ENCODE measurements at regions of chr6 and their contacts with region 1.

Region 1: GRCh38 chr6:42901536-42901957 is 14.3 kb upstream of the PTCRA start:
- DNase-seq: peak; percentile 76 to 88 (median 87)
- ATAC-seq: peak; percentile 100
- H3K4me3 ChIP-seq: peak overlapping the region in 1 of 3 donors; percentile 18
- H3K27ac ChIP-seq: peak overlapping the region in 1 of 3 donors; percentile 49
- H3K4me1 ChIP-seq: peaks cover 0 to 14% (median 3%) of the 10 kb centered on the region in 4 donors
- H3K27me3 ChIP-seq: no peaks in the 10 kb centered on the region
- CTCF ChIP-seq: peak; percentile 87 to 96 (median 93)
- POLR2A ChIP-seq: no peak

Region 2: DNA sequence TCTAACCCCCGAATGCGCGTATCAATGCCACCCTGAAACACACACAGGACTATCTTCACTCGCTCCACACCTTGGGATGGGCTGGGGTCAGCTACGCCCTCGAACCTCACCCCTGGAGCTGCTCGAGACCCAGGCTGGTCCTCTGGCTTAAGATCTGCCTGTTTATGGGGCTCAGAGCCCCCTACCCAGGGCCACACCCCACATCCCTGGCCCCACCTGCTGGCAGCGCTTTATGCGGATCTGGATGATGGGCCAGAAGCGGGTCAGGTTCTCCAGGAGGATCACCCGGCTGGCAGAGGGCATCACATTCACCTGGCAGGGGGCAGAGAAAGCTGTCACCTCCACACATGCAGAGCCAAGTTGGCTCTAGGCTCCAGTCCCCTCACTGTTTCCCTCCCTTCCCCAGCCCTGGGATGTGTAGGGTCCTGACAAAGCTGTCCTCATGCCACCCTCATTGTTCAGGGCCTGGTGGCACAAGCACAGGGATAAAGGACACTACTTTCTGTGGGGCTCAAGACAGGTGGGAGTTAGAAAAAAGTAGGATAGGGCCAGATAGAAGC is 143.9 kb after region 1 on chr6:
- intact Hi-C with region 1: loop called in 1 of 2 experiments (anchors 10 kb)
- DNase-seq: no peak
- ATAC-seq: no peak
- H3K4me3 ChIP-seq: no peak overlapping the region
- H3K27ac ChIP-seq: no peak overlapping the region
- H3K4me1 ChIP-seq: no peaks in the 10 kb centered on the region
- H3K27me3 ChIP-seq: no peaks in the 10 kb centered on the region
- CTCF ChIP-seq: no peak
- POLR2A ChIP-seq: no peak

Region 3: GRCh38 chr6:43129434-43130194 is 228.1 kb after region 1 on chr6:
- intact Hi-C with region 1: loop called in 1 of 2 experiments (anchors 10 kb)
- DNase-seq: peak in 1 of 3 donors; percentile 46
- ATAC-seq: peak; percentile 54 to 84 (median 75)
- H3K4me3 ChIP-seq: no peak overlapping the region
- H3K27ac ChIP-seq: no peak overlapping the region
- H3K4me1 ChIP-seq: no peaks in the 10 kb centered on the region
- H3K27me3 ChIP-seq: no peaks in the 10 kb centered on the region
- CTCF ChIP-seq: peak; percentile 42 to 57 (median 48)
- POLR2A ChIP-seq: no peak

Region 4: DNA sequence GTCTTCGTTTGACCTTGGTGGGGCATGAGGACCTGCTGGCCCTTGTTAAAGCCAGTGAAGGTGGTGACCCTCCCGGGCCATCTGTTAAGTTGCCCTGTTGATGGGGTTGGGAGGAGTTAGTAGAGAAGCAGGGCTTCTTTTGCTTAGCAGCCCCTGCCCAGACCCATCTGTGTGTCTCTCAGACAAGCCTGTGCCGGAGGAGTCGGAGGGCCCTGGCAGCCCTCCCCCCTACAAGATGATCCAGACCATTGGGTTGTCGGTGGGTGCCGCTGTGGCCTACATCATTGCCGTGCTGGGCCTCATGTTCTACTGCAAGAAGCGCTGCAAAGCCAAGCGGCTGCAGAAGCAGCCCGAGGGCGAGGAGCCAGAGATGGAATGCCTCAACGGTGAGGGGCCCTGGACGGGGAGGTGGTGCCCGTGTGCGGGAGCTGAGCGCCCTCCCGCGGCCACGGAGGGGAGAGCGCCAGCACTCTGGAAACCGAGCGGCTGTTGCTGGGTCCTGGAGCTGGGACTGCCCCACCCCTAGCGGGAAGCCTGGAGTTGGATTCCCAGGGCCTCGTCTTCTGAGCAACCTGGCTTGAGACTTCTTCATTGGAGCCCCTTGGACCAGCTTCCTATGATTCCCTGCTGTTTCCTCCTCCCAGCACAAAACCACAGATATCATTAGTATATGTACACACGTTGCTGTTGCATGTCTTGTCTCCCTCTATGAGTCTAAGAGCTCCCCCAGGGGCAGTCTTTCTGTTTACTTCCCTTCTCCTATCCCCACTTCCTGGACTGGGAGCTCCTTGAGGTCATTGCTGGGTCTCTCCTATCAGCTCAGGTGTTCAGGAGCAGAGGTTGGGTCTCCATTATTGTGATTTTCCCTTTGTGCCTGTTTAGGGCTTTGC is 241.9 kb after region 1 on chr6:
- intact Hi-C with region 1: loop called in 1 of 2 experiments (anchors 10 kb)
- DNase-seq: peak; percentile 70 to 78 (median 77)
- ATAC-seq: peak; percentile 95 to 99 (median 98)
- H3K4me3 ChIP-seq: no peak overlapping the region
- H3K27ac ChIP-seq: no peak overlapping the region
- H3K4me1 ChIP-seq: peaks cover 0 to 6% (median 0%) of the 10 kb centered on the region in 4 donors
- H3K27me3 ChIP-seq: no peaks in the 10 kb centered on the region
- CTCF ChIP-seq: peak; percentile 81 to 96 (median 90)
- POLR2A ChIP-seq: no peak

Measured in right lobe of liver (tissue), 6 donors.